Endothelial cell of umbilical vein (primary cell): ENCODE measurements at regions of chr12 and their contacts with region 1.

Region 1: GRCh38 chr12:8662593-8662992 is at the start of gene MFAP5:
- DNase-seq: no peak
- H3K4me3 ChIP-seq: no peak within 1 kb of the TSS
- H3K27ac ChIP-seq: no peak within 1 kb of the TSS
- H3K4me1 ChIP-seq: no peaks in the 10 kb centered on the region
- H3K27me3 ChIP-seq: peaks cover 2 to 9% of the 10 kb centered on the region in 2 experiments
- CTCF ChIP-seq: no peak
- POLR2A ChIP-seq: no peak
- total RNA-seq, gene MFAP5: not detected in 2 replicates

Region 2: GRCh38 chr12:8453021-8453513 is 209.5 kb before region 1 on chr12:
- CTCF ChIA-PET with region 1: no interaction called
- POLR2A ChIA-PET with region 1: no interaction called
- dilution Hi-C with region 1: no loop called
- intact Hi-C with region 1: no loop called
- DNase-seq: no peak
- H3K4me3 ChIP-seq: no peak overlapping the region
- H3K27ac ChIP-seq: no peak overlapping the region
- H3K4me1 ChIP-seq: no peaks in the 10 kb centered on the region
- H3K27me3 ChIP-seq: peaks cover 0 to 3% of the 10 kb centered on the region in 2 experiments
- CTCF ChIP-seq: no peak
- POLR2A ChIP-seq: no peak

Region 3: DNA sequence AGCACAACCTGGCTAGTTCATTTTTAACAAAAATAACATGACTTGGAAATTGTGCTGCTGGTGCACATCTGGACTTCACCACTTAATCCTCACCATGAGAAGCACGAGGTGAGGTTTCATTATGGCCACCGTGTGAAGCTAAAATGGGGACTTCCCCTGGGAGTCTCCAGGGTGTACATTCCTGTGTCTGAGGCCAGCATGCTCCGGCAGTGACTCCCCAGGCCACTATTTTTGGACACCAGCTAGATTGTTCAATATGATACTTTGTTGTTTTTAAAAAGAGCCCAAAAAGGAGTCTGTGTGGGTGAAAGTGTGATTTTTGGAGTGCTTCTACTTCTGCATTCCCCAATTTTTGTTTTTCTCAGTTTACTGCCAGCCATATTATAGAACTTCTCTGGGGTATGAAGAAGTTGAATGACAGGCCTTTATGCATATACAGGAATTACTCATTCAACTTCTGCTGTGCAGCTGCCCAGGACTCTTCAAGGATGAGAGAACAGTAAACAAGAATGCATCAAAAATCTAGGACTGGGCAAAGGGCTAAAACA is 33.0 kb before region 1 on chr12:
- CTCF ChIA-PET with region 1: interaction called, 10 read pairs
- POLR2A ChIA-PET with region 1: no interaction called
- dilution Hi-C with region 1: no loop called
- intact Hi-C with region 1: no loop called
- DNase-seq: no peak
- H3K4me3 ChIP-seq: no peak overlapping the region
- H3K27ac ChIP-seq: no peak overlapping the region
- H3K4me1 ChIP-seq: no peaks in the 10 kb centered on the region
- H3K27me3 ChIP-seq: peaks cover 2 to 7% of the 10 kb centered on the region in 2 experiments
- CTCF ChIP-seq: no peak
- POLR2A ChIP-seq: no peak

Region 4: DNA sequence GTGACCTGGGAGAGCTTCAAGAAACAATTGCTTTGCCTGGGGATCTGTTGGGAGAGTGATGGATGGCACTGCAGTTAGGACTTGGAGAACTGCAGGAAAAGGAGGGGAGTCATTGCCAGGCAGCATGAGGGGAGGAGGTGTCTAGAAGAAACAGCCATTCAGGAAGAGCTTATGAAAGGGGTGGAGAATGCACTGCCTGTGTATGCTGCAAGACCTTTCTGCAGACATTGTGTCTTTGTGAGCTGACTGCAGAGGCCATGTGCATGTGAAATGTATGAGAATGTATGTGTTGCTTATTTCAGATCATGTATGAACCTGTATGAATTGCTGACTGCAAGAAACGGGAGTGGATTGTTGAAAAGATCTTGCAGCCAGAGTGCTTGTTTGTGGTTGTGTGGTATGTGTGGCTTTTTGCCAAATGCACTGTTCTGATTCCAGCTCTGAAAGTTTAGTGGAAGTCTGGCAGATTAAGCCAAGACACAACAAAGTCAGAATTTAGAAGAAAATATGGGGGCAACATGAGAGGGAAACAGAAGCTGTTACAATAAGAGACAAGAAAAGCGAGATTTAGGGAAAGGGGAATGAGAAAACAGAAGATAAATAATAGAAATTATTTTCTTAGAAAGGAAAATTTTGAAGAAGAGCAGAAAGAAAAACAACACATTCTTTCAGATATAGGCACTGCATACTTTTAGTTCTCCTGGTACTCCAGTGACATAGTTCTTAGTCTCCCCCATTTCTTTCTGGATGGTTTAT is 25.4 kb after region 1 on chr12:
- CTCF ChIA-PET with region 1: interaction called, 73 read pairs
- POLR2A ChIA-PET with region 1: interaction called, 4 read pairs
- dilution Hi-C with region 1: no loop called
- intact Hi-C with region 1: no loop called
- DNase-seq: peak; percentile 97
- H3K4me3 ChIP-seq: no peak overlapping the region
- H3K27ac ChIP-seq: peak overlapping the region; percentile 34
- H3K4me1 ChIP-seq: peaks cover 32% of the 10 kb centered on the region
- H3K27me3 ChIP-seq: no peaks in the 10 kb centered on the region
- CTCF ChIP-seq: no peak
- POLR2A ChIP-seq: peak; percentile 77

Region 5: DNA sequence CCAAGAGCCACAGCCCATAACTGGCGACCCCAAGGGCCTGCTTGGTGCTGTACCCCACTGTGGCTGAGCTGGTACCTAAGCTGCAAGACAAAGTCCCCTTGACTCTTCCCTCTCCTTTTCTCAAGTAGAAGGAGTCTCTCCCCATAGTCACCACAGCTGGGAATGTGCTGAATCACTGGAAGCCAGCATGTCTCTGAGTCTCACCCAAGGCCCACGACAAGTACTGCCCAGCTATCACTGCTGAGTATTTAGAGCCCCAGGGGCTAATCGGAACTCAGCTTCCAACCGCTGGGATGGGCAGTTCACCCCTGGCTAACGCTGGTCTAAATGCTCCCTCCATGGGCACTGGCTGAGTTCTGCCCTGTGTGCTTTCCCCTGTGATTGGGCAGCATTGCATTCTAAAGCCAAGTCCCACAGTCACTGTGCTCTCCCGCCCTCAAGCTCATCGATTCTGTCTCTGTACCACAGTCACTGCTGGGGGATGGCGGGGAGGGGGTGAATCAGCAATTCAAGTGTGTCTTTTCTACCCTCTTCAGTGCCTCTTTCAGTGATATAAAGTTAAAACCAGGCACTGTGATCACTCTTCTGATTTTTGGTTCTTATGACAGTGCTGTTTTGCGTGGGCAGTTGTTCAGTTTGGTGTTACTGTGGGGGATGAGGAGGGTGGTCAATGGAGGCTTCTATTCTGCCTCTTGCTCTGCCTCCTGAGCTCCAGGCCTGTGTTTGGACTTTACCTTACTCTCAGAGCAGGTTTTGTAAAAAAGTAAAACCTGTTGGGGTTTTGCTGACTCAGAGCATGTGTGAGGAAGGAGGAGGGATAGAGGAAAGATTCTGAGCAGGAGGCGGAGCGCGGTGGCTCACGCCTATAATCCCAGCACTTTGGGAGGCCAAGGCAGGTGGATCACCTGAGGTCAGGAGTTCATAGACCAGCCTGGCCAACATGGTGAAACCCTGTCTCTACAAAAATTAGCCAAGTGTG is 166.2 kb after region 1 on chr12:
- CTCF ChIA-PET with region 1: interaction called, 122 read pairs
- POLR2A ChIA-PET with region 1: no interaction called
- dilution Hi-C with region 1: no loop called
- intact Hi-C with region 1: no loop called
- DNase-seq: no peak
- H3K4me3 ChIP-seq: no peak overlapping the region
- H3K27ac ChIP-seq: no peak overlapping the region
- H3K4me1 ChIP-seq: no peaks in the 10 kb centered on the region
- H3K27me3 ChIP-seq: no peaks in the 10 kb centered on the region
- CTCF ChIP-seq: no peak
- POLR2A ChIP-seq: no peak

Region 6: GRCh38 chr12:8949342-8950220 is 287.0 kb after region 1 on chr12 and contains the start of gene M6PR:
- CTCF ChIA-PET with region 1: interaction called, 12 read pairs
- POLR2A ChIA-PET with region 1: no interaction called
- dilution Hi-C with region 1: no loop called
- intact Hi-C with region 1: loop called (anchors 1 kb)
- DNase-seq: peak; percentile 95
- H3K4me3 ChIP-seq: peak within 1 kb of the TSS; percentile 58 to 96 (median 95)
- H3K27ac ChIP-seq: peak within 1 kb of the TSS; percentile 98
- H3K4me1 ChIP-seq: peaks cover 21% of the 10 kb centered on the region
- H3K27me3 ChIP-seq: no peaks in the 10 kb centered on the region
- CTCF ChIP-seq: peak; percentile 46 to 74
- POLR2A ChIP-seq: peak; percentile 75
- total RNA-seq, gene M6PR: 113 and 142 TPM in 2 replicates

Region 7: GRCh38 chr12:9132008-9132535 is 469.5 kb after region 1 on chr12:
- CTCF ChIA-PET with region 1: no interaction called
- POLR2A ChIA-PET with region 1: no interaction called
- dilution Hi-C with region 1: no loop called
- intact Hi-C with region 1: no loop called
- DNase-seq: no peak
- H3K4me3 ChIP-seq: no peak overlapping the region
- H3K27ac ChIP-seq: no peak overlapping the region
- H3K4me1 ChIP-seq: no peaks in the 10 kb centered on the region
- H3K27me3 ChIP-seq: peaks cover 2 to 3% of the 10 kb centered on the region in 2 experiments
- CTCF ChIP-seq: no peak
- POLR2A ChIP-seq: no peak